Activated CD4-positive, alpha-beta T cell treated with anti-CD3 and anti-CD28 coated beads, Interleukin-2, amount 10 ng/mL, durations not matched to agents 7 days and 5 days (primary cell): ENCODE measurements at regions of chr2 and their contacts with region 1.

Region 1: GRCh38 chr2:135797497-135798274 is 39.3 kb downstream of the LCT start:
- DNase-seq: peak; percentile 84
- H3K4me3 Mint-ChIP-seq: no peak overlapping the region
- H3K27ac Mint-ChIP-seq: no peak overlapping the region
- H3K4me1 Mint-ChIP-seq: peaks cover 15% of the 10 kb centered on the region
- H3K27me3 Mint-ChIP-seq: no peaks in the 10 kb centered on the region

Region 2: GRCh38 chr2:135785032-135785431 is 12.7 kb before region 1 on chr2:
- CTCF ChIA-PET with region 1: interaction called, 49 read pairs
- POLR2A ChIA-PET with region 1: no interaction called
- DNase-seq: no peak
- H3K4me3 Mint-ChIP-seq: no peak overlapping the region
- H3K27ac Mint-ChIP-seq: no peak overlapping the region
- H3K4me1 Mint-ChIP-seq: no peaks in the 10 kb centered on the region
- H3K27me3 Mint-ChIP-seq: no peaks in the 10 kb centered on the region

Region 3: DNA sequence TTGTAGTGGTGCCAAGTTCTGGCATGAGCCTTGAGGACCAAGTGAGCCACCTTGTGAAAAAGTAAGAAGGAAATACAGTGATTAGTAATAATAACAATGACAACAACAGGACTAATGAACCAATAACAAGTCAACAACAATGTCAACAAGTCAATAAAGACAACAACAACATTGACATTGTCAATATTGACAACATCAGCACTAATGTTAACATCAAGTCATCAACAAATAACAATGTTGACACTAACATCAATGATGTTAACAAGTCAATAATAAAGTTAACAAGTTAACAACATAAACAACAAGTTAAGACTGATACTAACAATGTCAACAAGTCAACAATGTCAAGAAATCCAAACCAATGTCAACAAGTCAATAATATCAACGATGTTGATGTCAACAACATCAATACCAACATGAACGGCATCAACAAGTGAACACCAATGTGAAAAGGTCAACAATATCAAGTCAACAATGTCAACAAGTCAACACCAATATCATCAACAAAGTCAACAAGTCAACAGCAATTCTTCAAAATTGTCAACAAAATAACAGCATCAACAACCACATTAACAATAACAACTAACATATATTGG is 15.3 kb after region 1 on chr2:
- CTCF ChIA-PET with region 1: interaction called, 11 read pairs
- POLR2A ChIA-PET with region 1: no interaction called
- DNase-seq: no peak
- H3K4me3 Mint-ChIP-seq: no peak overlapping the region
- H3K27ac Mint-ChIP-seq: no peak overlapping the region
- H3K4me1 Mint-ChIP-seq: peaks cover 1% of the 10 kb centered on the region
- H3K27me3 Mint-ChIP-seq: no peaks in the 10 kb centered on the region

Region 4: GRCh38 chr2:135851858-135852257 is 54.2 kb after region 1 on chr2:
- CTCF ChIA-PET with region 1: no interaction called
- POLR2A ChIA-PET with region 1: no interaction called
- DNase-seq: no peak
- H3K4me3 Mint-ChIP-seq: no peak overlapping the region
- H3K27ac Mint-ChIP-seq: no peak overlapping the region
- H3K4me1 Mint-ChIP-seq: peaks cover 10% of the 10 kb centered on the region
- H3K27me3 Mint-ChIP-seq: no peaks in the 10 kb centered on the region